Activated naive CD4-positive, alpha-beta T cell treated with anti-CD3 and anti-CD28 coated beads, Interleukin-2, amount 10 ng/mL, durations not matched to agents 7 days and 5 days (primary cell): ENCODE measurements at regions of chr3 and their contacts with region 1.

Region 1: GRCh38 chr3:16842272-16843270 is 42.2 kb upstream of the PLCL2 start:
- DNase-seq: peak; percentile 85
- H3K4me3 Mint-ChIP-seq: peak overlapping the region; percentile 73
- H3K27ac Mint-ChIP-seq: peak overlapping the region; percentile 98
- H3K4me1 Mint-ChIP-seq: peaks cover 86% of the 10 kb centered on the region
- H3K27me3 Mint-ChIP-seq: no peaks in the 10 kb centered on the region

Region 2: DNA sequence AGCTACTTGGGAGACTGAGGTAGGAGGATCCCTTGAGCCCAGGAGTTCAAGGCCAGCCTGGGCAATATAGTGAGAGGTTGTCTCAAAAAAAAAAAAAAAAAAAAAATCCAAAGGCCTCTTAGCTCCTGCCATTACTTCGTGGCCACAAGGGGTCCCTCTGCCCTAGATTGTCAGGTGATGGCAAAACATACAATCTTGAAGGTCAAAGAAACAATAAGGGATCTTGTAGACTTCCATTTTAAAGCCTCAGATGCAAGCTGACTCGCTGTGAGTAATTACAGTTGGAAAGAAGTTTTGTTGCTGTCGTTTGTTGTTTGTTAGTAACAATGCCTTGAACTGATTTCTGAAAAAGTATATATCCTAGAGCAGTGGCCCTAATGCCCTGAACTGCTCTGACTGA is 13.8 kb before region 1 on chr3:
- CTCF ChIA-PET with region 1: interaction called, 14 read pairs
- DNase-seq: peak; percentile 72
- H3K4me3 Mint-ChIP-seq: no peak overlapping the region
- H3K27ac Mint-ChIP-seq: no peak overlapping the region
- H3K4me1 Mint-ChIP-seq: peaks cover 35% of the 10 kb centered on the region
- H3K27me3 Mint-ChIP-seq: peaks cover 8% of the 10 kb centered on the region

Region 3: GRCh38 chr3:16884084-16884747 is 41.6 kb after region 1 on chr3:
- CTCF ChIA-PET with region 1: interaction called, 44 read pairs
- DNase-seq: peak; percentile 78
- H3K4me3 Mint-ChIP-seq: peak overlapping the region; percentile 96
- H3K27ac Mint-ChIP-seq: peak overlapping the region; percentile 99
- H3K4me1 Mint-ChIP-seq: peaks cover 35% of the 10 kb centered on the region
- H3K27me3 Mint-ChIP-seq: peaks cover 4% of the 10 kb centered on the region